Activated CD4-positive, alpha-beta memory T cell treated with anti-CD3 and anti-CD28 coated beads for 36 hours (primary cell): ENCODE measurements at regions of chr4 and their contacts with region 1.

Region 1: DNA sequence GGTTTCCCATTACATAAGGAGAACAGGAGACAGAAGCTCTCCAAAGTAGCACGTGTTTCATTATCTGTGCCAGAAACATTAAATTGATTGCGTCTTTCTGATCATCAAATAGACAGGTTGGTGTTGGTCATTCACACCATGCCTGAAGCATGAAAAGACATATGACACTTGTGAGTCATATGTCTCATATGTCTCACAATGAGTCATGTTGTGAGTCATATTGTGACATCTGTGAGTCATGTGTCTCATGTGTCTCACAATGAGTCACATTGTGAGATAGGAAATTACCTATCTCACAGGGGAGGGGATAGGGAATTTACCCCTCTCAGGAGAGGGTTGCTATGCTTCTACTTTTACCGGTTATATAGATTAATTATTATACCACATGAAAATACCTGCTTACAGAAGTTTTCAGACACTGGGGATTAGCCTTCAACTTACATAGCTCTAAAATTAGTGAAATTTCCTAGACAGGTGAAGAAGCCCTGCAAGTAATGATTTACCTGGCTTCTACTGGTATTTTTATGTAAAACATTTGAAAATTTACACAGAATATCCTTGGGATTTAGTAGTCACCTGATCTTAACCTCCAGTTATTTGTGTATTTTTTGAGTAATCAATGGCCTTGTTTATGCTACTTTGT is 80.8 kb downstream of the NPFFR2 start:
- DNase-seq: peak; percentile 24
- H3K4me3 Mint-ChIP-seq: no peak overlapping the region
- H3K27ac Mint-ChIP-seq: no peak overlapping the region
- H3K4me1 Mint-ChIP-seq: peaks cover 5% of the 10 kb centered on the region
- H3K27me3 Mint-ChIP-seq: no peaks in the 10 kb centered on the region

Region 2: DNA sequence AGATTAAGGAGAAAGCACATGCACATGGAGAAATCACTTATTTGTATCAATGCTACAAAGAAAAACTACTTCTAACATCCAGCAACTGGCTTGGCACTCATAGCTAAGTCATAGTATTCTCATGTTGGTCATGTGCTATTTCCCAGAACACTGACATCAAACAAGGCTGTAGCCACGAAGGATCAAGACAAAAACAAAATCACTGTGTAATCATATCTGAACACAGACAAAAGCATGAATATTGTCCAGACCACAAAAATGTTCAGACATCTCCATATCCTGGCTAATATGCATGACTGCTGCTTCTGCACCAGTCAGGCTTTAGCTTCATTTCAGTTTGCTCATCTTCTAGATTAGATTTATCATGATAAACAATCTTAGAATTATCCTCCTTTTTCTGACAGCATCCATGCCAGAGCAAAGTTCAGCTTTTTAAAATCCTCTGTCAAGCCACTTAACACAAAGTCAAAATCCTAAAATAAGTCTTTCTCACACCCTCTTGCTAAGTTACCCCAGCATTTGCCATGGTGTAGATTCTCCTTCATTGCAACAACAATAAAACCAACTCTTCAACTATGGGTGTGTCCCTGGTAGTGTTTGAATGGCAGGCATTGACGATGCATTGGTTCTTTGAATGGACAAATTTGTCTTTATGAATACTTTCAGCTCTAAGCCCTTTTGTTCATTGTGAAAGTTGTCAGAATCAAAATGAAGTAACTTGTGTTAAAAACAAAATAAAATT is 119.9 kb before region 1 on chr4:
- CTCF ChIA-PET with region 1: no interaction called
- POLR2A ChIA-PET with region 1: no interaction called
- intact Hi-C with region 1: no loop called
- DNase-seq: no peak
- H3K4me3 Mint-ChIP-seq: no peak overlapping the region
- H3K27ac Mint-ChIP-seq: no peak overlapping the region
- H3K4me1 Mint-ChIP-seq: no peaks in the 10 kb centered on the region
- H3K27me3 Mint-ChIP-seq: no peaks in the 10 kb centered on the region

Region 3: DNA sequence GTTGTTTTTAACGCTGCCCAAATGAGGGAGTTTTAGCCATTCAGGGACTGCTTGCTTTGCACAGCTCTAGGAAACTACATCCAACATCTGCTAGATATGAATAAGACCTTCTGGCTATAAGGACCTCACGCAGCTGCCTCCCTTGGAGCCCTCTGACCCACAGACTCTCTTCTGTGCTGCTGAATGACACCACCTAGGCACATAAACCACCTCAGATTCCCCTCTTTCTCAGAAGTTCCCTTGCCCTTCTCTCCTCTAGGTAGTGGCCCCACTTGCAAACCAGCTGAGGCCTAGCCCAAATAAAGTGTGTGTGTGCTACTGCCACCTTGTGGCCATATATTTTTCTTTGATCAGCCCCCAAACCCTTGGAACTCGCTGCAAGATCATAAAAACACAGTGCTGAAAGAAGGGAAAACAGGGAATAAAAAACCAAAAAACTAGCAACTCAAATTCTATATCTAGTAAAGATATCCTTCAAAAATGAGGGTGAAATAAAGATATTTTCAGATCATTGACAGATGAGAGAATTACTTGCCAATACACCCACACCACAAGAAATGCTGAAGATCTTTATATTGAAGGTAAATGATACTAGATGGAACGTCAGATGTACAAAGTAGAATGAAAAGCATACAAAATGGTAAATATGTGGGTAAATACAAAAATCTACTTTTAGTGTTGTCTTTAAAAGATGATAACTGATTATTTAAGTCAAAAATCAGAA is 190.5 kb after region 1 on chr4:
- CTCF ChIA-PET with region 1: no interaction called
- POLR2A ChIA-PET with region 1: no interaction called
- intact Hi-C with region 1: loop called (anchors 10 kb)
- DNase-seq: peak; percentile 40
- H3K4me3 Mint-ChIP-seq: no peak overlapping the region
- H3K27ac Mint-ChIP-seq: no peak overlapping the region
- H3K4me1 Mint-ChIP-seq: no peaks in the 10 kb centered on the region
- H3K27me3 Mint-ChIP-seq: no peaks in the 10 kb centered on the region